ENCODE measurements at regions of chr3 and their contacts with region 1.

Region 1: GRCh38 chr3:41111016-41111415 is 88.3 kb upstream of the CTNNB1 start:
- DNase-seq: no peak

Region 2: GRCh38 chr3:41075975-41076374 is 35.0 kb before region 1 on chr3:
- intact Hi-C with region 1: loop called (anchors 5 kb)
- DNase-seq: no peak

Region 3: DNA sequence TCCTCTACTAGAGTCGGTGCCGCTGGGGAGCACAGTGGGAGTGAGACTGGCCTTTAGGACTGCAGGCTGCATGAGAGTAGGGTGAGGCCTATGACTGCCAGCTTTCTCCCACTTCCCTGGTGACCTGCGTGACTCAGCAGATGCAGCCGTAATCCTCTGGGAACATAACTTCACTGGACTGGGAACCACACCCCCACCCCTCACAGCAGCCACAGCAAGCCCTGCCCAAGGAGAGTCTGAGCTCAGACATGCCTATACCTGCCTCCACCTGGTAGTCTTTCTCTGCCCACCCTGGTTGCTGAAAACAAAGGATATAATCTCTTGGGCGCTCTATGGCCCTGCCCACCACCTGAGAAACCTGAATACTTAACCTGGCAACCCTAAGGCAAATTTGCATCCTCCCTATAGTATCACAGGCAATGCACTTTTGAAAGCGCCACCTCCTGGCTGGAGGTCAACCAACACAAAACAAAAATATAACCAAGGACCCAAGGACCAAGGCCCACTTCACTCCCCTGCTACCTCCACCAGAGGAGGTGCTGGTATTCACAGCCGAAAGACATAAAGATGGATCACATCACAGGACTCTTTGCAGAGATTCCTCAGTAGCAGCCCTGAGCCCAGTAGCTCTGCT is 397.2 kb after region 1 on chr3:
- intact Hi-C with region 1: no loop called
- DNase-seq: no peak

Region 4: GRCh38 chr3:41863024-41863423 is 752.0 kb after region 1 on chr3:
- intact Hi-C with region 1: no loop called
- DNase-seq: no peak

Measured in cardiac septum (tissue), 1 donor.